ENCODE measurements at regions of chr7 and their contacts with region 1.

Region 1: DNA sequence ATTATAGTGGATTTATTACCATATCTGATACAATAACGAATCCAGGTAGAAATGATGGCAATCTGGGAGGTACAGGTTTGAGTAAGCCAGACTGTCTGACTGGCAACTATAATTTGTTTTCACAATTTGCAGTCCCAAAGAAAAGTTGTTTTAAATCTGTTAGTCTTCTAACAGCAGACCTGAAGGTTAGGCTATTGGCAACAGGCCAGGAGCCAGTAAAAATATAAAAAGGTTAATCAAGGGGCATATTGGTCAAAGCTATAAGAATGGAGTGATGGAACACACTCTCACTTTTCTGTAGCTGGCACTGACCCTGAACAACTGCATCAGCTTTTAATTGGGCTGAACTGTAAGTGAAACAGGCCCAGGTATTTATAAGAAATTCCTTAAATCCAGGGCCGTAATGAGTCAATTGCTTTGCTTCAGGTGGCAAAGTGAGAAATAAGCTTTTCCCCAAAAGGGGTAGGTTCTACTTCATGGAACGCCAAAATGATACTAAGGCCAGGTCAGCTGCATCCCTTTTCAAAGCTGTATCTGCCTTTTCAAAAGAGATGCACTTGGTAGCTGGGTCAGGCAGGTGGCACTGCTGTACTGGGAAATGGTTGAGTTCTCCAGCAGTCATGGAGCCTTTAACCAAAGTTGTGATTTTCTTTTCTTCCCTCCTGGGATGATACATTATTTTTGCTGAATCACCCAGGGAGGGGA is 7.0 kb upstream of the GPR22 start:
- DNase-seq: peak in 1 of 2 donors; percentile 67
- H3K4me3 ChIP-seq: no peak overlapping the region
- H3K27ac ChIP-seq: no peak overlapping the region
- H3K4me1 ChIP-seq: no peaks in the 10 kb centered on the region
- H3K27me3 ChIP-seq: no peaks in the 10 kb centered on the region
- CTCF ChIP-seq: peak; percentile 68 to 84 (median 70)

Region 2: DNA sequence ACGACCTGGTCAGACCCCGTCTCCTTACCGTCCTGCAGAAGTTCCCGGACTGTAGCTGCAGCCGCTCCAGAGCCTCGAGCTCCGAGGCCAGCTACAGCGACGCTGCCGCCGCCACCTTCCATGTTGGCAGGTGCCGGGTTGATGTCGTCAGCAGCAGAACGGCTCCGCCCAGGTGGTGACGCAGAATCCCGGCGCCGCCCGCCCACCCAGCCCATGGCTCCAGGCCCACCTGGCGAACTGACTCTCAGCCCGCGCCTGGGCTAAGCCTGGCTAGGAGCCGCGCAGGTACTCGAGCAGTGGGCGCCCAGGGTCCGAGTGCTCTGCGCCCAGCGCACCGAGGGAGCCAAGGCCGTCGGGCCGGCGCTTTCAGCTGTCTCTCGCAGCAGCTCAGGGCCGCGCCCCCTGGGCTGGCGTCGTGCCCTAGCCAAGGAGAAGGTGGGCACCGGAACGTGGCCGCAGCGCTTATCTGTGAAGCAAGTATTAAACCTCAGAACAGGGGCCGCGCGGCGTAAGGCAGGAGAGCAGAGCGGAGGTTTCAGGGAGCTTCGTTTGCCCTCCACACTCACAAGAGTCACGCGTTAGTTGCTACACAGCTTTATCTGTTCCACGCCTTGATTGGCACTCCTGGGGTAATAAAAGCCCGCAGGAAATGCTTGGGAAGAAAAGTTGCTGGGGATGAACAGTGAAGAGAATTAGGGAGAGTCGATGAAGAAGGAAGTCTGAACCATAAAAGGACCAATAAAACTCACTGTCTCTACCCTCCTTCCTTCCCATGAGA is 101.1 kb after region 1 on chr7 and contains the starts of genes COG5 and DUS4L:
- intact Hi-C with region 1: loop called (anchors 5 kb)
- DNase-seq: peak; percentile 31 to 89
- H3K4me3 ChIP-seq: peak within 1 kb of the TSS; percentile 94 to 96
- H3K27ac ChIP-seq: peak within 1 kb of the TSS; percentile 96 to 97
- H3K4me1 ChIP-seq: peaks cover 3 to 21% of the 10 kb centered on the region in 2 donors
- H3K27me3 ChIP-seq: no peaks in the 10 kb centered on the region
- CTCF ChIP-seq: no peak
- total RNA-seq, gene COG5: 16.8 TPM
- total RNA-seq, gene DUS4L: 0.75 TPM

Region 3: DNA sequence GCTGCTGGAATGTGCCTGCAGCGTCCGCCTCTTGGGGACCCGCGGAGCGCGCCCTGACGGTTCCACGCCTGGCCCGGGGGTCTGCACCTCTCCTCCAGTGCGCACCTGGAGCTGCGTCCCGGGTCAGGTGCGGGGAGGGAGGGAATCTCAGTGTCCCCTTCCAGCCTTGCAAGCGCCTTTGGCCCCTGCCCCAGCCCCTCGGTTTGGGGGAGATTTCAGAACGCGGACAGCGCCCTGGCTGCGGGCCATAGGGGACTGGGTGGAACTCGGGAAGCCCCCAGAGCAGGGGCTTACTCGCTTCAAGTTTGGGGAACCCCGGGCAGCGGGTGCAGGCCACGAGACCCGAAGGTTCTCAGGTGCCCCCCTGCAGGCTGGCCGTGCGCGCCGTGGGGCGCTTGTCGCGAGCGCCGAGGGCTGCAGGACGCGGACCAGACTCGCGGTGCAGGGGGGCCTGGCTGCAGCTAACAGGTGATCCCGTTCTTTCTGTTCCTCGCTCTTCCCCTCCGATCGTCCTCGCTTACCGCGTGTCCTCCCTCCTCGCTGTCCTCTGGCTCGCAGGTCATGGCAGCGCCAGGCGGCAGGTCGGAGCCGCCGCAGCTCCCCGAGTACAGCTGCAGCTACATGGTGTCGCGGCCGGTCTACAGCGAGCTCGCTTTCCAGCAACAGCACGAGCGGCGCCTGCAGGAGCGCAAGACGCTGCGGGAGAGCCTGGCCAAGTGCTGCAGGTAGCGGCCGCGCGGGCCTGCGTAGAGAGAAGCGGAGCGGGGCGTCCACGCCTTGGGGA is 198.4 kb after region 1 on chr7:
- intact Hi-C with region 1: loop called (anchors 10 kb)
- DNase-seq: peak in 1 of 2 donors; percentile 73
- H3K4me3 ChIP-seq: peak overlapping the region; percentile 52 to 75
- H3K27ac ChIP-seq: no peak overlapping the region
- H3K4me1 ChIP-seq: peaks cover 9 to 10% of the 10 kb centered on the region in 2 donors
- H3K27me3 ChIP-seq: no peaks in the 10 kb centered on the region
- CTCF ChIP-seq: peak in 1 of 3 experiments; percentile 45

Region 4: GRCh38 chr7:107725151-107725740 is 262.4 kb after region 1 on chr7:
- intact Hi-C with region 1: loop called (anchors 1 kb)
- DNase-seq: no peak
- H3K4me3 ChIP-seq: no peak overlapping the region
- H3K27ac ChIP-seq: no peak overlapping the region
- H3K4me1 ChIP-seq: no peaks in the 10 kb centered on the region
- H3K27me3 ChIP-seq: no peaks in the 10 kb centered on the region
- CTCF ChIP-seq: peak; percentile 46 to 71 (median 63)

Region 5: GRCh38 chr7:107879400-107880035 is 416.6 kb after region 1 on chr7:
- intact Hi-C with region 1: loop called (anchors 5 kb)
- DNase-seq: no peak
- H3K4me3 ChIP-seq: no peak overlapping the region
- H3K27ac ChIP-seq: no peak overlapping the region
- H3K4me1 ChIP-seq: no peaks in the 10 kb centered on the region
- H3K27me3 ChIP-seq: no peaks in the 10 kb centered on the region
- CTCF ChIP-seq: peak; percentile 41 to 61 (median 59)

Measured in ascending aorta (tissue), 2 donors.